Activated CD8-positive, alpha-beta T cell treated with anti-CD3 and anti-CD28 coated beads, Interleukin-2, amount 10 ng/mL, durations not matched to agents 7 days and 5 days (primary cell): ENCODE measurements at regions of chr15 and their contacts with region 1.

Region 1: GRCh38 chr15:86653344-86654197 is 573.9 kb downstream of the AGBL1 start:
- DNase-seq: no peak
- ATAC-seq: peak; percentile 91
- H3K4me3 Mint-ChIP-seq: peak overlapping the region; percentile 57
- H3K27ac Mint-ChIP-seq: peak overlapping the region; percentile 80
- H3K4me1 Mint-ChIP-seq: peaks cover 59% of the 10 kb centered on the region
- H3K27me3 Mint-ChIP-seq: no peaks in the 10 kb centered on the region

Region 2: GRCh38 chr15:86624261-86625036 is 29.1 kb before region 1 on chr15:
- CTCF ChIA-PET with region 1: interaction called, 11 read pairs
- POLR2A ChIA-PET with region 1: interaction called, 7 read pairs
- DNase-seq: peak; percentile 76
- ATAC-seq: peak; percentile 98
- H3K4me3 Mint-ChIP-seq: no peak overlapping the region
- H3K27ac Mint-ChIP-seq: peak overlapping the region; percentile 39
- H3K4me1 Mint-ChIP-seq: peaks cover 27% of the 10 kb centered on the region
- H3K27me3 Mint-ChIP-seq: peaks cover 4% of the 10 kb centered on the region

Region 3: GRCh38 chr15:86725628-86726027 is 72.1 kb after region 1 on chr15:
- CTCF ChIA-PET with region 1: no interaction called
- POLR2A ChIA-PET with region 1: no interaction called
- DNase-seq: no peak
- ATAC-seq: no peak
- H3K4me3 Mint-ChIP-seq: no peak overlapping the region
- H3K27ac Mint-ChIP-seq: no peak overlapping the region
- H3K4me1 Mint-ChIP-seq: no peaks in the 10 kb centered on the region
- H3K27me3 Mint-ChIP-seq: no peaks in the 10 kb centered on the region

Region 4: GRCh38 chr15:86743283-86743903 is 89.8 kb after region 1 on chr15:
- CTCF ChIA-PET with region 1: interaction called, 13 read pairs
- POLR2A ChIA-PET with region 1: no interaction called
- DNase-seq: peak; percentile 57
- ATAC-seq: peak; percentile 57
- H3K4me3 Mint-ChIP-seq: no peak overlapping the region
- H3K27ac Mint-ChIP-seq: no peak overlapping the region
- H3K4me1 Mint-ChIP-seq: no peaks in the 10 kb centered on the region
- H3K27me3 Mint-ChIP-seq: no peaks in the 10 kb centered on the region